B cell (primary cell): ENCODE measurements at regions of chr2 and their contacts with region 1.

Region 1: DNA sequence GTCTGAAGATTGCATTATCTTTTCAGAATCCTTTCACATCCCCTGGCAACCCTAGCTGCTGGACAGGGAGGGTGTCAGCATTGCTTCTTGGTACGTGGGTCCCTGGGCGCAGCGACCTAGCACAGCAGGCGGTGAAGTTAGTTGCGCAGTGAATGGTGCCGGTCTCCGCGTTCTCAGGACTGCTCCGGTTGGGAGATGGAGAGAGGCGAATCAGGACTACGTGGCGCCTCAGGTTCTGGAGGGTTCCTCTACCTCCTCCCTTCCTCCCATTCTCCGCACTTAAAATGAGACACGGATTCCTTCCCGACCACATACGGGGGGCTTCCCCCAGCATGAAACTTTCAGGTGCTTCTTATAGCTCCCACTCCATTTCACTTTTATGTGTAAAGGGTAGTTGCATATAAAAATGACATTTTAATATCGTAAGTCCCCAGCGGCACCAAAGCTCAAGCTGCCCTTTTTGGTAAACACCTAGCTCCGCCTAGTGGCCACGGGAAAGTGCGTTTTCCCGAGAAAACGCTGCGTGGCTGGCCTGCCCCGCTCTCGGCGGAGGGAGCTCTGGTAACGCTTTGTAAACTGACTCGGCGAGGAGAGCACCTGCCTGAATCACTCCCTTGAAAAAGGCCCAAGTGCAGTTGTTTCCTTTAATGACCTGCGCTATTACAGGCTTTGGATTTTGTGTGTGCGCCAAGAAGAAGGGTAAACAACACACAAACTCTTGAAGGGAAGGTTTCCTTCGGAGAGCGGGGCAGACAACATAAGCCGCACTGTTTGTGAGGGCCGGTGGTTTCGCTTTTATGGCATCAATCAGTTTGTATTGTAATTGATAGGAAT is 32.9 kb upstream of the INHBB start:
- DNase-seq: peak; percentile 76
- ATAC-seq: peak; percentile 74
- H3K4me3 ChIP-seq: peak overlapping the region; percentile 16 to 42 (median 35)
- H3K4me3 Mint-ChIP-seq: peak overlapping the region; percentile 86
- H3K27ac ChIP-seq: peak overlapping the region in 1 of 2 donors; percentile 36
- H3K27ac Mint-ChIP-seq: peak overlapping the region; percentile 37
- H3K4me1 ChIP-seq: peaks cover 10 to 14% of the 10 kb centered on the region in 2 donors
- H3K4me1 Mint-ChIP-seq: peaks cover 14% of the 10 kb centered on the region
- H3K27me3 ChIP-seq: peaks cover 0 to 16% (median 1%) of the 10 kb centered on the region in 4 experiments
- H3K27me3 Mint-ChIP-seq: peaks cover 22% of the 10 kb centered on the region
- CTCF ChIP-seq: peak; percentile 83

Region 2: GRCh38 chr2:119702918-119703401 is 610.1 kb before region 1 on chr2:
- CTCF ChIA-PET with region 1: interaction called, 26 read pairs
- POLR2A ChIA-PET with region 1: no interaction called
- intact Hi-C with region 1: loop called (anchors 1 kb)
- DNase-seq: peak; percentile 70
- ATAC-seq: peak; percentile 97
- H3K4me3 ChIP-seq: no peak overlapping the region
- H3K4me3 Mint-ChIP-seq: no peak overlapping the region
- H3K27ac ChIP-seq: no peak overlapping the region
- H3K27ac Mint-ChIP-seq: no peak overlapping the region
- H3K4me1 ChIP-seq: peaks cover 0 to 5% of the 10 kb centered on the region in 2 donors
- H3K4me1 Mint-ChIP-seq: no peaks in the 10 kb centered on the region
- H3K27me3 ChIP-seq: peaks cover 0 to 10% (median 4%) of the 10 kb centered on the region in 4 experiments
- H3K27me3 Mint-ChIP-seq: peaks cover 3% of the 10 kb centered on the region
- CTCF ChIP-seq: peak; percentile 97

Region 3: DNA sequence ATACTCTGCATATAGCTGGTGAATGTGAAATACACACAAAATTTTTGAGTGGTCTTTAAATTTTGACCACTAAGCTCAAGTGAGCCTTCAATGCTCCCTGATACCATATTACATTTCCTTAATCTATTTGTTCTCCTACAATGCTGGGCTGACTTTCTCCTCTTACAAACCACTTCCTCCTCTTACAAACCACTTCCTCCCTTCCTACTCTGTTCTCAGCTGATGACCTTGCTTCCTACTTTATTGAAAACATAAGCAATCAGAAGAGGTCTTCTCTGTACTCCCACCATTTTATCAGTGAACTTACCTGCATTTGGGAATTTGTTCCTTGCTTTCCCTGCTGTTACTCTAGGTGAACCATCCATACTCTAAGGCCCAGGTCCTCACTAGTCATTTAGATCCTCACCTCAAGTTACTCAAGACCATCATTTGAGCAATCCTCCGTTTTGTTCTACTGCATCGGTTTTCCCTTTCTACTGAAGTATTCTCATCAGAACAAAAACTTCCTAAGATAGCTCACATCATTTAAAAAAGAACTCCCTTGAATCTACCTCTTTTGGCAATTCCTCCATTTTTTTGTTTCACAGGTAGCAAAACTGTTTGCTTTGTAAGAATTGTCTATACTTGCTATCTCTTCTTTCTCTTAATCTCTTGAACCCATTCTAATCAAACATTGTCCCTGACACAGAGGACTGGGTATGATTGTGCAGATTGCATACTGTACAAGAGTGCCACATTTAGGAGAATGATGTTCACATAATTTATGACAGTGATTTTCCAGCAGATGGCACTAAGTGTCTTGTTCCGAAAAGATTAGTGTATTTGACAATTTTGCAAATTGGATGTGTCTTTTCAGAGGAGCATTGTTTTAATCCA is 203.7 kb before region 1 on chr2:
- CTCF ChIA-PET with region 1: interaction called, 47 read pairs
- POLR2A ChIA-PET with region 1: no interaction called
- intact Hi-C with region 1: no loop called
- DNase-seq: peak; percentile 48
- ATAC-seq: peak; percentile 49
- H3K4me3 ChIP-seq: peak overlapping the region in 2 of 5 experiments; percentile 20 to 21
- H3K4me3 Mint-ChIP-seq: peak overlapping the region; percentile 61
- H3K27ac ChIP-seq: peak overlapping the region in 1 of 2 donors; percentile 52
- H3K27ac Mint-ChIP-seq: peak overlapping the region; percentile 38
- H3K4me1 ChIP-seq: peaks cover 12 to 13% of the 10 kb centered on the region in 2 donors
- H3K4me1 Mint-ChIP-seq: peaks cover 17% of the 10 kb centered on the region
- H3K27me3 ChIP-seq: no peaks in the 10 kb centered on the region
- H3K27me3 Mint-ChIP-seq: no peaks in the 10 kb centered on the region
- CTCF ChIP-seq: peak; percentile 68

Region 4: DNA sequence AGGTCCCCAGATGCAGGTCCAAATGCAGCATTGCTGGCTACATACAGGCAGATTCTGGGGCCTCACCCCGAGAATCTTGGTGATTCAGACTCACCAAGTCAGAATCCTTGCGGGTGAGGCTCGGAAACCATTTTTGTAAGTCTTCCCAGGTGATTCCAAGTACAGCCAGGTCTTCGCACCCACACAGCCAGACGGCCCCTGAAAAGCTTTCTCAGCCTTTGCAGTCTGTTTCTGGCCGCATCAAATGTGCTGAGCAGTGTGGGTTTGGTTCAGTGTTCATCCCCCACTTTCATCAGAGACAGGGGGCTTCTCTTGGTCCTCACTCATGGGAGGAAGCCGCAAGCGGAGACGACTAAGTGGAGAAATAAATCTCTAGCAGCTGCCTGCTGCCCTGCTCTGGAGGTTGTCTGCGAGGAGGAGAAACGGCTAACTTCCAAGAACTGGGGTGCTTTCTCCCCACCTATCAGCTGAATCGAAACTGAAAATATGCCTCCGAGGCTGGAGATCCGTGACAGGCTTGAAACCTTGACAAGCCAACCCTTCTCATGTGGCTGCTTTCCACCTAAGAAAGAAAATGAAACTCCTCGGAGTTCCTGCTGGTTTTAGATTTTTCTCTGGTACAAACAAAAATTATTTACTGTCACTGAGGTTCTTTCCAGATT is 81.0 kb before region 1 on chr2:
- CTCF ChIA-PET with region 1: interaction called, 8 read pairs
- POLR2A ChIA-PET with region 1: interaction called, 7 read pairs
- intact Hi-C with region 1: loop called (anchors 2 kb)
- DNase-seq: peak; percentile 85
- ATAC-seq: peak; percentile 91
- H3K4me3 ChIP-seq: peak overlapping the region; percentile 48 to 78 (median 73)
- H3K4me3 Mint-ChIP-seq: peak overlapping the region; percentile 91
- H3K27ac ChIP-seq: peak overlapping the region; percentile 57 to 87
- H3K27ac Mint-ChIP-seq: peak overlapping the region; percentile 92
- H3K4me1 ChIP-seq: peaks cover 26 to 37% of the 10 kb centered on the region in 2 donors
- H3K4me1 Mint-ChIP-seq: peaks cover 50% of the 10 kb centered on the region
- H3K27me3 ChIP-seq: no peaks in the 10 kb centered on the region
- H3K27me3 Mint-ChIP-seq: no peaks in the 10 kb centered on the region
- CTCF ChIP-seq: no peak

Region 5: DNA sequence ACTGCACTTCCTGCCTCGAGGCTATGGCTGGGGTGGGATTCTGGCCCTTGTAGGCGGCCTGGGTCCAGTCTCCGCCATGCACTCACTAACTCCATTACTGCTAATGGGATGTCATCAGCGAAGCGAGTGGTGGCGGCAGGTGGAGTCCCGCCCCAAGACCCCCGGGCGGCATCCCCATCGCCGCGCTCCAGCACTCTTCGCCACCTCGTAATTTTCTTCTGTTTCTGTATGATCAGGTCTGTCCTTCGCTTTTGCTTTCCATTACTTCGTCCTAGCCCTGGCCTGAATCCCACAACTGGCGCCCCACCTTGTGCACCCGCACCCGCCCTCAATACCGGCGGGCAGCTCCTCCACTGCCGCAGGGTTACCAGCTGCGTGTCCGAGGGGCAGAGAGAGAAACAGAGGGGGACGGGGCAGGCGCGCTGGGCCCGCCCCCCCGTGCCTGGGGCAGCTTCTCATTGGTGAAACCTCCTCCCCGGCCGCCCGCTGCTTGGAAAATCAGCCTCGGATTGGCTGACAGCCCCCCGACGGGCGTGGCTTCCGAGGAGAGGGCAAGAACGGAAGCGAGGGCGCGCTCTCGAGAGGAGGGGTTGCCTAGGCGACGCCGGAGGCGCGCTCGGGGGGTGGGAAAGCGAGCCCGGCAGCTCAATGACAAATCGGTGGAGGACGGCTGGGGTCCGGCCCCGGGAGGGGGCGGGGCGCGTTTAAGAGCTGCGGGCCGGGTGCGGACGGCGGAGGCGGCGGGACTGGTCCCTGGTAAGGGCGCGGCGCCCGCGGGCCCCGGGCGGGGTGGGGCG is 60.7 kb before region 1 on chr2 and contains the start of gene RALB:
- CTCF ChIA-PET with region 1: interaction called, 15 read pairs
- POLR2A ChIA-PET with region 1: interaction called, 3 read pairs
- intact Hi-C with region 1: loop called (anchors 2 kb)
- DNase-seq: peak; percentile 98
- ATAC-seq: peak; percentile 94
- H3K4me3 ChIP-seq: peak within 1 kb of the TSS; percentile 63 to 95 (median 92)
- H3K4me3 Mint-ChIP-seq: peak within 1 kb of the TSS; percentile 98
- H3K27ac ChIP-seq: peak within 1 kb of the TSS; percentile 65 to 73
- H3K27ac Mint-ChIP-seq: peak within 1 kb of the TSS; percentile 96
- H3K4me1 ChIP-seq: peaks cover 51 to 54% of the 10 kb centered on the region in 2 donors
- H3K4me1 Mint-ChIP-seq: peaks cover 60% of the 10 kb centered on the region
- H3K27me3 ChIP-seq: peaks cover 0 to 9% (median 2%) of the 10 kb centered on the region in 4 experiments
- H3K27me3 Mint-ChIP-seq: peaks cover 10% of the 10 kb centered on the region
- CTCF ChIP-seq: no peak
- total RNA-seq, gene RALB: 35.9 and 36.7 TPM in 2 replicates

Region 6: DNA sequence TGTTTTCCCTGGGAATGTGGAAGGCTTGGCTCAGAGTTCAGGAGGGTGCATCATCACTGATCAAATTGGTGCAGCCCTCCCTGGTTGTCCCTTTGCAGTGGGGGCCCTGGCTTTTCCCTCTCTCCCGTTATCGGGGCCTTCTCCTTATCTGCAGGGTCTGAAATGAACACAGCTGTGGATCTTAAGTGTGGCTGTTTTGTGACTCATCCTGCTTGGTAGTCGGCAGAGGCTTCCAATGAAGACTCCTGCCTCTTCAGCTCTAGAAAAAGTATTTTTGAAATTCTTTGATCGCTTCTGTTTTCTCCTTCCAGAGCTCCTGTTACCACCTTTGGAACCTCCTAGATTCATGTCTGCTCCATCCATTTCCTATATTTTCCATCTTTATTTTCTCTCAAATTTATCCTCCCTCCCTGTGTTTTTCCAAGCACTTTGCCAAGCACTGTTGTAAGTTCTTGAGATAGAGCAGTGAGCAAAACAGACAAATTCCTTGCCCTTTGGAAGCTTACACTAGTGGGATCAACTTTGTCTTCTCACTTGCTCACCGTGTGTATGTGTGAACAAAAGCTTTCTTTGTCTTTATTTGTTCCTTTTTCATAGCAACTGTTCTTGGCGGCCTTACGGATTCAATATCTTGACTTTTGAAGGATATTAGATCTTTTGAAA is 14.8 kb before region 1 on chr2:
- CTCF ChIA-PET with region 1: interaction called, 24 read pairs
- POLR2A ChIA-PET with region 1: no interaction called
- intact Hi-C with region 1: no loop called
- DNase-seq: no peak
- ATAC-seq: no peak
- H3K4me3 ChIP-seq: no peak overlapping the region
- H3K4me3 Mint-ChIP-seq: no peak overlapping the region
- H3K27ac ChIP-seq: no peak overlapping the region
- H3K27ac Mint-ChIP-seq: no peak overlapping the region
- H3K4me1 ChIP-seq: no peaks in the 10 kb centered on the region
- H3K4me1 Mint-ChIP-seq: peaks cover 15% of the 10 kb centered on the region
- H3K27me3 ChIP-seq: no peaks in the 10 kb centered on the region
- H3K27me3 Mint-ChIP-seq: no peaks in the 10 kb centered on the region
- CTCF ChIP-seq: no peak